ENCODE measurements at regions of chr6 and their contacts with region 1.

Region 1: GRCh38 chr6:168956884-168957730 is 296.5 kb downstream of the THBS2 start:
- DNase-seq: peak; percentile 75
- H3K4me3 Mint-ChIP-seq: no peak overlapping the region
- H3K27ac Mint-ChIP-seq: no peak overlapping the region
- H3K4me1 Mint-ChIP-seq: peaks cover 11% of the 10 kb centered on the region
- H3K27me3 Mint-ChIP-seq: no peaks in the 10 kb centered on the region
- CTCF ChIP-seq: peak; percentile 91

Region 2: DNA sequence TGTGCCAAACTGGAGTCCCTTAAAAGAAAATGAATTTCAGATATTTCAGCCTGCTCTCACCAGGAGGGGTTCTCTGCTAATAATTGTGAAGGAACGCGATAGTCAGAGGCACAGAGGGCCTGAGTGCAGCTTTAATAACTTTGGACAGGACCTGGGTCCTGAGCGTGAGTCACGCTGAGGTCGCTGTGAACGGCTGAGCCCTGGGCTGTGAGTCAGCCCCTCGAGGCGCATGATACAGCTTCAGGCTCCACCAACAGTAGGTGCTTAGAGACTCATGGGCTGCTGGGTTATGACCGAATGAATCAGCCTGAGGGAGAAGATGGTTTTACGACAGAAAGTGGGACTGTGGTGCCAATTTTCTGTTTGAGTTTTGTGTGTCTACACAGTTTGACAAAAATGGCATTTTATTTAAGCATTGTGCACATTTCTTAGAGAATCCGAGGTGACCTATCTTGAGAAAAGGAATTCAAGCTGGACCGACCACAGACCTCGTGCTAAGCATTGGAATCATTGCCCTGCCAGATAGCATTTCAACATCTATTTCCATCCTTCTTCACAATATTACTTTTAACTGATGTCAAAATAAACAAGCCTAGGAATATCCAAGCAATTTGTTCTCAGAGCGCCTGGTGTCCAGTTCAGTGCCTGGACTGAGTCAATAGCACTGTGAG is 113.5 kb after region 1 on chr6:
- CTCF ChIA-PET with region 1: interaction called, 4 read pairs
- POLR2A ChIA-PET with region 1: no interaction called
- intact Hi-C with region 1: loop called (anchors 10 kb)
- DNase-seq: peak; percentile 96
- H3K4me3 Mint-ChIP-seq: peak overlapping the region; percentile 58
- H3K27ac Mint-ChIP-seq: peak overlapping the region; percentile 57
- H3K4me1 Mint-ChIP-seq: peaks cover 22% of the 10 kb centered on the region
- H3K27me3 Mint-ChIP-seq: no peaks in the 10 kb centered on the region
- CTCF ChIP-seq: no peak

Region 3: DNA sequence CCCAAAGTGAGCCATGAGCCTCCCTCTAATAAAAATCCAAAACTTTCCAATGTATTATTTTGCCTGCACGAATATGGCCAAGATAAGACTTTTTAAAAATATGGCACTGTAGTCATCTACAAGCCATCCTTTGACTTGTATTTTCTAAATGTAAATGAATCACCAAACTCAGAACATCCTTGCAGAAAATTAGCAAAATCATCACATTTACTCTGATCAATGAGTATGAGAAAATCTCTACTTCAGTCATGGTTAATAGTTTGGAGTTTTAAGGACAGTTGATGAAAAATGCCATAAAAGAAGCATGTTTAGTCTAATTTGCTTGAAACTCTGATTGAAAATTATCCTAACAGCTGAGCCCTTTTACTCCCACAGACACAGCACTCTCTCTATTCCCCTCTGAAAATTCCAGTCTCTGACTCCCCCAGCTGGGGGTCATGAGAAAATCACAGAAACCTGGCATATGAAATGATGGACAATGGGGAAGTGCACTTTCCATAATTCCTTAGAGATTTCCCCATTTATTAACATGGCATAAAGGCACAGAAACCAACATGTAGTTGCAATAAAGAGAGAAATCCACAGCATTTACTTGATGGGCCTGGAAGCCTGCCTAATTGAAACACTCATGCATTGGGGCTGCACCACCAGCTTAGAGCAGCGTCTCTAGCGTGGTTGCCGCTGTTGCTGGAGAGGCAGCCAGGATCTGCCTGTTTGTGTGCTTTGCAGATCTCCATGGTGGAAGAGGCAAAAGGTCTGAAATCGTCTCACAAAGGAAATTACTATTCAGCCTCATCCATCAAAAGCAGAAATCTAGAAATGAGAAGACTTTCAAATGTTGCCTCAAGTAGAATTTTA is 530.7 kb after region 1 on chr6:
- CTCF ChIA-PET with region 1: no interaction called
- POLR2A ChIA-PET with region 1: no interaction called
- intact Hi-C with region 1: loop called (anchors 1 kb)
- DNase-seq: peak; percentile 16
- H3K4me3 Mint-ChIP-seq: no peak overlapping the region
- H3K27ac Mint-ChIP-seq: no peak overlapping the region
- H3K4me1 Mint-ChIP-seq: no peaks in the 10 kb centered on the region
- H3K27me3 Mint-ChIP-seq: no peaks in the 10 kb centered on the region
- CTCF ChIP-seq: no peak

Region 4: DNA sequence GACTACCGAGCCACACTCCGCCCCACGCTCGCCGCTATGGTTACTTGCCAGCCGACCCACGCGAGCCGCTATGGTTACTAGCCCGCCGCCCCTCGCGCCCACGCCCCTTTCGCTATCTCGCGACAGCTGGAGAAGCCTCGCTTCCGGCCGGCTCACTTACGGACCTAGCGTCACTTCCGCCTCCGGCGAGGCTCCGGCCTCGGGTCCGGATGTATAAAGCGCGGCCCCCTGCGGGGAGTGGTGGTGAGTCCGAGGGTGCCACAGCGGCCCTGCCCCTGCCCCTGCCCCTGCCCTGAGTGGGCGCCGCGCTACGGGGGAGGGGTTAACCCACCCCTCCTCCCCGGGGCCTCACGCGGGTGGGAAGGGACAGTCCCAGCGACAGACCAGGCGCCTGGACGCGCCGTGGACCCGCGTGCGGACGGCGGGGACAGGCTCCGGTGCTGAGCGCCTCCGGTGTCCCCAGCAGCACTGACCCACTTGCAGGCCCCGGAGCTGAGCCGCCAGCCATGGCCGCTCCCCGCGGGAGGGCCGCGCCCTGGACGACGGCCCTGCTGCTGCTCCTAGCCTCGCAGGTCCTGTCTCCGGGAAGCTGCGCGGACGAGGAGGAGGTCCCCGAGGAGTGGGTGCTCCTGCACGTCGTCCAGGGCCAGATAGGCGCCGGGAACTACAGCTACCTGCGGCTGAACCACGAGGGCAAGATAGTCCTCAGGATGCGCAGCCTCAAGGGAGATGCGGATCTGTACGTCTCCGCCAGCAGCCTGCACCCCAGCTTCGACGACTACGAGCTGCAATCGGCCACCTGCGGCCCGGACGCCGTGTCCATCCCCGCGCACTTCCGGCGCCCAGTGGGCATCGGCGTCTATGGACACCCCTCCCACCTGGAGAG is 745.1 kb after region 1 on chr6 and contains the starts of genes C6orf120 and WDR27:
- CTCF ChIA-PET with region 1: interaction called, 3 read pairs
- POLR2A ChIA-PET with region 1: no interaction called
- intact Hi-C with region 1: loop called (anchors 2 kb)
- DNase-seq: peak; percentile 96
- H3K4me3 Mint-ChIP-seq: peak within 1 kb of the TSS; percentile 86
- H3K27ac Mint-ChIP-seq: peak within 1 kb of the TSS; percentile 46
- H3K4me1 Mint-ChIP-seq: peaks cover 42% of the 10 kb centered on the region
- H3K27me3 Mint-ChIP-seq: no peaks in the 10 kb centered on the region
- CTCF ChIP-seq: no peak
- total RNA-seq, gene C6orf120: 25.3 and 26.3 TPM in 2 replicates
- total RNA-seq, gene WDR27: 65.4 and 80.6 TPM in 2 replicates

Region 5: DNA sequence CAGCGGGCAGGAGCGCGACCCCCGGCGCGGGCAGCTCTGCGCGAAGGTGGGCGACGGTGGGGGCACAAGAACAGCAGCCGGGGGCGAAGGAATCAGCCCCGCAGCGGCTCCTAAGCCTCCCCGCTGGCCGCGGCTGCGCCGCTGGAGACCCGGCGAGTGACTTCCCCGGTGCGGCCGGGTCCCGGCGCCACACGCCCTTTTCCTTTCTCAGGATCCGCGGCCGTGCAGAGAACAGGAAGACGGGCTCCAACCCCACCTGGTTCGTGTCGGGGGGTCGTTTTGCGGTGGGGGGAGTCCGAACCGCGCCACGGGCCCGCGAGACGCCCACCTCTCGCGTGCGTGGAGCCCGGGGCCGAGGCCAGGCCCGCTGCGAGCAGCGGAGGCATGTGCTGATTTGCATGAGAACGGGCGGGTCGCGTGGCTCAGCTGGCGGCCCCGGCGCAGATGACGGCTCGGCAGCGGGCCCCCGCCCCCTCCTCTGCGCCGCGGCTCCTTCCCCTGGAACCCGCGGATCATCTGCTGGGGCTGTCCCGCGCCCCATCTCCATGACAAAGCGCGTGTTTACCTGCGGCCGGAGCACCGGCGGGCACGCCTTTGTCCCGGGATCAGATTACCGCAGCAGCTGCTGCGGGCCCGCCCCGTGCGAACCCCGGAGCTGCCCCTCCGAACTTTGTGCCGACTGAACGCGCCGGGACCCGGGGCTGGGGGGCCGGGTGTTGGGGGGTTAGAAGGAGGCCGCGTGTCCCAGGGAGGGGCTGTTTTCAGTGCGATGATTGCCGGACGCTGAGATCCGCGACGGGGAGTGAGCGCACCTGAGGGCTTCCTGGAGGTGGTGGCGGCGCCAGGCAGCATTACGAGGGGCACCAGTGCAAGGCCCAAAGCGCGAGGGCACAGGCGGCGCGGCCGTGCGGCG is 1338.7 kb after region 1 on chr6:
- CTCF ChIA-PET with region 1: no interaction called
- POLR2A ChIA-PET with region 1: no interaction called
- intact Hi-C with region 1: loop called (anchors 2 kb)
- DNase-seq: peak; percentile 34
- H3K4me3 Mint-ChIP-seq: peak overlapping the region; percentile 71
- H3K27ac Mint-ChIP-seq: no peak overlapping the region
- H3K4me1 Mint-ChIP-seq: peaks cover 10% of the 10 kb centered on the region
- H3K27me3 Mint-ChIP-seq: peaks cover 47% of the 10 kb centered on the region
- CTCF ChIP-seq: no peak